ENCODE measurements at regions of chr3 and their contacts with region 1.

Region 1: GRCh38 chr3:65439641-65440284 is 599.0 kb downstream of the MAGI1 start:
- DNase-seq: peak; percentile 74
- ATAC-seq: peak; percentile 95
- H3K4me3 ChIP-seq: no peak overlapping the region
- H3K27ac ChIP-seq: no peak overlapping the region
- H3K4me1 ChIP-seq: peaks cover 6% of the 10 kb centered on the region
- H3K27me3 ChIP-seq: no peaks in the 10 kb centered on the region
- CTCF ChIP-seq: peak; percentile 72
- POLR2A ChIP-seq: no peak
- RAD21 ChIP-seq: peak; percentile 86

Region 2: GRCh38 chr3:64163755-64164148 is 1276.0 kb before region 1 on chr3:
- CTCF ChIA-PET with region 1: no interaction called
- POLR2A ChIA-PET with region 1: no interaction called
- dilution Hi-C with region 1: no loop called
- in situ Hi-C with region 1: no loop called
- intact Hi-C with region 1: no loop called
- DNase-seq: peak; percentile 96
- ATAC-seq: peak; percentile 74
- H3K4me3 ChIP-seq: no peak overlapping the region
- H3K27ac ChIP-seq: peak overlapping the region; percentile 63
- H3K4me1 ChIP-seq: peaks cover 12% of the 10 kb centered on the region
- H3K27me3 ChIP-seq: no peaks in the 10 kb centered on the region
- CTCF ChIP-seq: no peak
- POLR2A ChIP-seq: no peak
- RAD21 ChIP-seq: 0 out of 2 replicates have a peak, but pooled peaks have one; percentile 12

Region 3: GRCh38 chr3:64685800-64686445 is 753.8 kb before region 1 on chr3:
- CTCF ChIA-PET with region 1: no interaction called
- POLR2A ChIA-PET with region 1: no interaction called
- dilution Hi-C with region 1: no loop called
- in situ Hi-C with region 1: no loop called
- intact Hi-C with region 1: loop called (anchors 5 kb)
- DNase-seq: peak; percentile 88
- ATAC-seq: peak; percentile 83
- H3K4me3 ChIP-seq: peak overlapping the region; percentile 64
- H3K27ac ChIP-seq: peak overlapping the region; percentile 89
- H3K4me1 ChIP-seq: peaks cover 3% of the 10 kb centered on the region; the same call in 1 of the 2 replicates
- H3K27me3 ChIP-seq: no peaks in the 10 kb centered on the region
- CTCF ChIP-seq: peak; percentile 35
- POLR2A ChIP-seq: peak; percentile 29
- RAD21 ChIP-seq: no peak

Region 4: DNA sequence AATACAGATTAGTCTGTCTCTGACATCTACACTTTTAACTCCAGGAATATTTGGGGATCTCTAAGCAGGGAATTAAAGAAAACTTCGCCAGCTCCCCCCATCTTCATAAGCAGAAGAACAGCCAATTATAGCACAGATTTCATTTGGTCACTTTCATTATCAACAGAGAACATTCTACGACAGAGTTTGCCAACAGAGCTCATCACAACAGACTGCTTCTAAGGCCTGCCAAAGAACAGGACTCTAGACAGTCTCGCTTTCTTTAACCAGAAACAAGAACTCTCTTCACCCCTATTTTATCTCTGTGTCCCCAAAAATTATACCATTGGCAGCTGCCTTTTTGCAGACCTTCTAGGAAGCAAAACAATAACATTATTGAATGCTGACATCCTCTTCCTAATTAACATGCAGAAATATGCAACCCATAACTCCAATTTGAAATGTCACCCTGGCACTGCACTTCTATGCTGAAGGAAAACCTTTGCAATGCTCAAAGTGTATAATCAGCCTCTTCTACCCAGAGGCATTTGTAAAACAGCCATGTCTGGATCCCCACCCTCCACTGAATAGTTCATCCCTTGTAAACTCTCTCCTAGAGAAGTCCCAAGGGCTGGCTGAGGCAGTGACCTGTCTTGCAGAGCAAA is 46.2 kb after region 1 on chr3:
- CTCF ChIA-PET with region 1: no interaction called
- POLR2A ChIA-PET with region 1: no interaction called
- dilution Hi-C with region 1: no loop called
- in situ Hi-C with region 1: no loop called
- intact Hi-C with region 1: loop called (anchors 2 kb)
- DNase-seq: peak; percentile 5
- ATAC-seq: no peak
- H3K4me3 ChIP-seq: no peak overlapping the region
- H3K27ac ChIP-seq: no peak overlapping the region
- H3K4me1 ChIP-seq: peaks cover 2% of the 10 kb centered on the region; the same call in 1 of the 2 replicates
- H3K27me3 ChIP-seq: no peaks in the 10 kb centered on the region
- CTCF ChIP-seq: no peak
- POLR2A ChIP-seq: no peak
- RAD21 ChIP-seq: no peak

Region 5: DNA sequence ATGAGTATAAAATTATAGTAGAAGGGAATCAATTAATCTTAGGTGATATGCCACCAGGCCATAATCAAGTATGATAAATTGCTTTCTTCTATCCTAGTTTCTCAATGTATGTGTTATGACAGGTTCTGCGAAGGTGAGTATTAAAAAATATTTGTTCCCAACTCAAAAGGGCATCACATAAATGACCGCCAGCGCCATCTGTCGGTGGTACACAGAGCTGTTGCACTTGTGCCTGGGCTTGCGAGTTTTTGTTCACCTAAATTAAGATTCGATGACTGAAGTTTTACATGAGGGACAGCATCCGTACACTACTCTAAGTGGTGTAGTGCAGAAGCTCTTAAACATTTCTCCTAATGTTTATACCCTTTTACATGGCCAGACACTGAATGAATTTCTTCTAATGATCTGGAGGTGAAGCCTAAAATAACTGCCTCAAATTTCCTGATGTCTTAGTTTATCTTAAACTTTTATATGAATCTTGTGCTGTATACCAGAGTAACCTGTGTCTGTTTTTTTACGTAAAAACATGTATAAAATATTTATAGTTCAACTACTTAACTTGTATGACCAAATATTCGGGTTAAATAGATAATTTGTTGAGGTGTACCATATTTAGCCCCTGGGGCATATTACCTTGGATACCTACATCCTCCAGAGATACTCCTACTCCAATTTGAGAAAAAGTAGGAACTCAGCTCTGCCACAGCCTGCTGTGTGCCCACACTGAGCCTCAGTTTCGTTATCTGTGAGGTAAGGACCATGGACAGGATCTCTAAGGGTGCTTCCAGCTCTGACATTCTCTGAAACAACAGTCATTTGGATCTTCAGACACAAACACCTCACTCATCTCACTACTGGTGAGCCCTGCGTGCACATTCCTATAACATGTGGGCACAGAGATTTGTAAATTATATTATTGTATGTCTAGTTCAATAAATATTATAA is 233.4 kb after region 1 on chr3:
- CTCF ChIA-PET with region 1: interaction called, 5 read pairs
- POLR2A ChIA-PET with region 1: no interaction called
- dilution Hi-C with region 1: no loop called
- in situ Hi-C with region 1: loop called (anchors 10 kb)
- intact Hi-C with region 1: loop called (anchors 1 kb)
- DNase-seq: peak; percentile 57
- ATAC-seq: peak; percentile 68
- H3K4me3 ChIP-seq: no peak overlapping the region
- H3K27ac ChIP-seq: no peak overlapping the region
- H3K4me1 ChIP-seq: no peaks in the 10 kb centered on the region
- H3K27me3 ChIP-seq: no peaks in the 10 kb centered on the region
- CTCF ChIP-seq: peak; percentile 66
- POLR2A ChIP-seq: no peak
- RAD21 ChIP-seq: peak; percentile 69

Region 6: GRCh38 chr3:65732051-65732935 is 292.5 kb after region 1 on chr3:
- CTCF ChIA-PET with region 1: interaction called, 8 read pairs
- POLR2A ChIA-PET with region 1: no interaction called
- dilution Hi-C with region 1: no loop called
- in situ Hi-C with region 1: no loop called
- intact Hi-C with region 1: loop called (anchors 1 kb)
- DNase-seq: peak; percentile 80
- ATAC-seq: peak; percentile 86
- H3K4me3 ChIP-seq: no peak overlapping the region
- H3K27ac ChIP-seq: no peak overlapping the region
- H3K4me1 ChIP-seq: peaks cover 8% of the 10 kb centered on the region
- H3K27me3 ChIP-seq: no peaks in the 10 kb centered on the region
- CTCF ChIP-seq: peak; percentile 82
- POLR2A ChIP-seq: no peak
- RAD21 ChIP-seq: peak; percentile 88

Region 7: GRCh38 chr3:65751123-65751700 is 311.4 kb after region 1 on chr3:
- CTCF ChIA-PET with region 1: interaction called, 13 read pairs
- POLR2A ChIA-PET with region 1: no interaction called
- dilution Hi-C with region 1: no loop called
- in situ Hi-C with region 1: no loop called
- intact Hi-C with region 1: loop called (anchors 2 kb)
- DNase-seq: peak; percentile 34
- ATAC-seq: peak; percentile 89
- H3K4me3 ChIP-seq: no peak overlapping the region
- H3K27ac ChIP-seq: no peak overlapping the region
- H3K4me1 ChIP-seq: no peaks in the 10 kb centered on the region; the same call in 1 of the 2 replicates
- H3K27me3 ChIP-seq: no peaks in the 10 kb centered on the region
- CTCF ChIP-seq: peak; percentile 59
- POLR2A ChIP-seq: no peak
- RAD21 ChIP-seq: peak; percentile 54

Region 8: DNA sequence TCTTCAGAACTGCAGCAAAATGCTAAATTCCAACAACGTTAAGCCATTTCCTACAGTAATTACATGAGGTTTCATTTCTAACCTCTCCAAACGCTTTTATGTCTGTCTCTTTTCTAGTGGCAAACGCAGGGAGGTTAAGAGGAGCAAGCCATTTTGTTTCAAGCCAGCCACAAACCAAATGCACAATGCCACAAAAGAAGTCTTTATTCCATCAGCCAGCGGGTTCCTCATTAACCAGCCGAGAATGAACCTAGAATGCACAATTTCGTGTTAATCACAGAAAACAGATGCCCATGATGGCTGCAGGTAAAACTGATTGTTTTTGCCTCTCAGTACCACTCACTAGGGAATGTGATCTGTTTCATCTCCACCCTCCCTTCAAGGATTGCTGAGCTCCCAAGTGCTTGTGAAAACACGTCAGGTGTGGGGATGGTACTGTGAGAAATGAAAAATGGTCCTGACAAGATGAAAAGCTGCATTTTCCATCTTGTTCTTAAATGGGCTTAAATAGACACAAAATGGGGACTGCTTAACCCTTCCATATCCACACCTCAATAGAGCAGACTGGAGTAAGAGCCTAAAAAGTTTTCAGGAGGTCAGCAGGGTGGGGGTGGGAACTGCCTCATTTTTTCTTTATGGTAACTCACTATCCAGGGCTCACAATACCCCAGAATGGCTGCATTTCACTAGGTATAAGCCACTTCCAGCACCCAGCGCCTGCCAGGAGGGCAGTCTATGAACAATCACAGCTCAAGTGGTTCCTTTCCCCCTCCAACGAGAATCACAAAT is 321.9 kb after region 1 on chr3:
- CTCF ChIA-PET with region 1: no interaction called
- POLR2A ChIA-PET with region 1: no interaction called
- dilution Hi-C with region 1: no loop called
- in situ Hi-C with region 1: no loop called
- intact Hi-C with region 1: no loop called
- DNase-seq: no peak
- ATAC-seq: no peak
- H3K4me3 ChIP-seq: no peak overlapping the region
- H3K27ac ChIP-seq: no peak overlapping the region
- H3K4me1 ChIP-seq: peaks cover 4% of the 10 kb centered on the region
- H3K27me3 ChIP-seq: no peaks in the 10 kb centered on the region
- CTCF ChIP-seq: no peak
- POLR2A ChIP-seq: no peak
- RAD21 ChIP-seq: no peak

Region 9: DNA sequence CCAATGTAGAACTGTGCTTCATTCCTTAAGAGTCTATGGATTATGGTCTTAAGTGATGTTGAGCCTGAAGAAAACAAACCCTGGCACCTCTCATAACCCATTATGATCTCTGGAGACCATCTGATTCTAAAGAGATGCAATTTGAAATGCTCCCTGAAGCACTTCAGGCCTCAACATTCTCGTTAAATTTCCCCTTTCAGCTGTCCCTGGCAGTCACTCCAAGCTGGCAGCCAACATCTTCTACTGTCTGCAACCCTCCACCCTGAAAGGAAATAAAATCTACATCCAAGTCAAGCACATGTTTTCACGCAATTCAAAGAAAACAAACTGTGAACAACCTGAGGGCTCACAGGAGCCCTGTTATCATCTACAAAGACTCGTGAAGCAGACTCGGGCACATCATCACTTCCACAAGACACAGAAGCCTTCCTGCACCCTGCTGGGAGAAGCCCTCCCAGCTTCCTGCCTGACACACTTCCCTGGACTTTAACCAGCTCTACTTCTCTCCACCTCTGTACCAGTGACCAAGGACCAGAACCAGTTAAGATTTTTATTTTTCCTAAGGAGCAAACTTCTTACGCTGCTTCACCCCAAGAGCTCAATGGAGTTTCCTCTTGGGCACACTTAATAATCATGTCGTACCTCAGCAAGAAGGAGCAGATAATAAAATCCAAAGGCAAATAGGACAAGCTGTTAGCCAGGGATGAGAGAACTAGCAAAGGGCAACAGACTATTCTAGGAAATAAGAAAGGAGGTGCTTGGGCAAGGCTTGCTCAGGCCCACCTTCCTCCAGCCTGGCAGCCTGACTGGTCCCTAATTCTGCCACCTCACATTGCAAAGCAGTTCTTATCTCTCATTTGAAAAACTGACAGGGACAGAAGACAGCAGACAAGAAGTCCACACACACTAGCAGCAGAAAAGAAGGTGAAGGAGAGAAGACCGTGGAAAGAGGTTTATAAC is 531.8 kb after region 1 on chr3:
- CTCF ChIA-PET with region 1: no interaction called
- POLR2A ChIA-PET with region 1: no interaction called
- dilution Hi-C with region 1: no loop called
- in situ Hi-C with region 1: no loop called
- intact Hi-C with region 1: no loop called
- DNase-seq: no peak
- ATAC-seq: 0 out of 2 replicates have a peak, but pooled peaks have one; percentile 24
- H3K4me3 ChIP-seq: no peak overlapping the region
- H3K27ac ChIP-seq: no peak overlapping the region
- H3K4me1 ChIP-seq: no peaks in the 10 kb centered on the region; the same call in 1 of the 2 replicates
- H3K27me3 ChIP-seq: no peaks in the 10 kb centered on the region
- CTCF ChIP-seq: no peak
- POLR2A ChIP-seq: no peak
- RAD21 ChIP-seq: no peak

Region 10: DNA sequence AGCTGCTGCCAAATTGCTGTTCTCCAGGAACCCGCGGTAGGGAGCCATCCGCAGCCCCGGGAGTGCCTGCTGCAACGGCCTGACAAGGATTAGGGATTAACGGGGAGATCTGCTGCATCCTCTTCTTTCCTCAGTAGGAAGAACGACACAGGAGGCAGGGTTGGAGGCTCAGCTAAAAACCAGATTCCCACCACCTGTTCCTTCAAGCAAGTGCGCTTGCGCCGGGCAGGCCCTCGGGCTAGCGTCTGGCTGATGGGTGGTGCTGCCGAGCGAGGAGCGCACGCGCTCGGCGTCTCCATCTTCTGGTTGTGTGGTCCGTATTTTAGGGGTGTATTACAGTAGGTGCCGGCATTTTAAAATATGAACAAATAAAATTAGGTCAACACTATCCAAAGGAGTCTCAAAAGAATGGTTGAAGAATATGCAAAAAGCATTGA is 755.6 kb after region 1 on chr3:
- CTCF ChIA-PET with region 1: no interaction called
- POLR2A ChIA-PET with region 1: no interaction called
- dilution Hi-C with region 1: no loop called
- in situ Hi-C with region 1: loop called (anchors 25 kb)
- intact Hi-C with region 1: loop called (anchors 1 kb)
- DNase-seq: peak; percentile 68
- ATAC-seq: peak; percentile 98
- H3K4me3 ChIP-seq: peak overlapping the region; percentile 38; the same call in 1 of the 2 replicates
- H3K27ac ChIP-seq: no peak overlapping the region
- H3K4me1 ChIP-seq: no peaks in the 10 kb centered on the region
- H3K27me3 ChIP-seq: peaks cover 3% of the 10 kb centered on the region; the same call in 1 of the 2 replicates
- CTCF ChIP-seq: peak; percentile 52
- POLR2A ChIP-seq: no peak
- RAD21 ChIP-seq: peak; percentile 66